ENCODE measurements at regions of chr15 and their contacts with region 1.

Region 1: DNA sequence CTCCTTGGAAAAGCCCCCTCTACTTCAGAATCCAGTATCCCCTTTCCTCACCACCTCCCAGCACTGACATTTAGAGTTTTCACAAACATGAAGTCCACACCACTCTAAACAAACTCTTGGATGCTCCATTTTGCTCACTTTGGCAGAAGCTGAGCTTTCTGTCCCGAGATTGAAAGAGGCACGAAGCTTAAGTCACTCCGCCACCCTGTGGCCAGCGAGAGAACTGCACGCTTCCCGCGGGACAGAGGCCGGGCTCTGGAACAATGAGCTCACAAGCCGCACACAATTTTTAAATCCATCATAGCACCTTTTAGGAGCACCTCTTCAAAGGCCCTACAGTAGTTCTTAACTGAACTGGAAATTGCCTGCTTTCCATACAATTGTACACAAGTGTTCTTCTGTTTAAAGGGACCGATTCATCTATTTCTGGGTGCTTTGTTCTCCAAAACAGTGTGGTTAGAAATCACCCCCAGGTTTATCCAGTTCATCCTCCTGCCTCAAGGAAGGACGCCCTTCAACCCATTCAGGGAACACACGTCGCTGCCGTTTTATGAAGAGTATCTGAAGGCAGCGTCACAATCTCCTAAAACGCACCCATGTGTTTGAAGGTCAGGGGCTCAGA is 226.1 kb downstream of the VPS13C start:
- DNase-seq: peak; percentile 85
- ATAC-seq: peak; percentile 74
- H3K4me3 Mint-ChIP-seq: no peak overlapping the region
- H3K27ac Mint-ChIP-seq: no peak overlapping the region
- H3K4me1 Mint-ChIP-seq: peaks cover 2% of the 10 kb centered on the region
- H3K27me3 Mint-ChIP-seq: peaks cover 19% of the 10 kb centered on the region

Region 2: DNA sequence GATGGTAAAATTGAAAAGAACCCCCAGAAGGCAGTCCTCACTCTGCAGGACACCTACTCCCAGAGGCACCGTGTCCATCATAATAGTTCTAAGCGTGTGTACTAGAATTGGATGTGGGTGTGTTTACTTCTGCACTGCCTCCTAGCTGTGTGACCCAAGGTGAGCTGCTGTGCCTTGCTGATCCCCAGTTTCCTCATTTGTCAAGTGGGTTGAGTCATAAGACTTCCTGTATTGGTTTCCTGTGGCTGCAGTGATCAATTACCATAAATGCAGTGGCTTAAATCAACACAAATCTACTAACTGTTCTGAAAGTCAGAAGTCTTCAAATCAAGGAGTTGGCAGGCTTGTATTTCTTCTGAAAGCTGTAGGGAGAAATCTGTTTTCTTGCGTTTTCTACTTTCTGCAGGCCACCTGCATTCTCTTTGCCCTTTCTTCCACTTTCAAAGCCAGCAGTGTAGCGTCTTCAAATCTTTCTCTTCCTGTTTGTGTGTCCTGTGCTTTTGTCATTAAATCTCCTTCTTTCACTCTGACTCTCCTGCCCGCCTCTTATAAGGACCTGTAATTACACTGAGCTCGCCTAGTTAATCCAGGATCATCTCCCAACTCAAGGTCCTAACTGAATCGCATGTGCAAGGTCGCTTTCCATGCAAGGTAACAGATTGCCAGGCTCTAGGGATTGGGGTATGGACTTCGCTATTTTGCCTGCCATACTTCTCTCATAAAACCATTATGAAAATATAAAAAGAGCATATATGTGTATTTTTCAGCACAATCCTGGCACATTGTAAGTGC is 664.1 kb before region 1 on chr15:
- CTCF ChIA-PET with region 1: interaction called, 26 read pairs
- POLR2A ChIA-PET with region 1: no interaction called
- intact Hi-C with region 1: loop called (anchors 1 to 2 kb)
- DNase-seq: peak; percentile 45
- ATAC-seq: peak; percentile 89
- H3K4me3 Mint-ChIP-seq: no peak overlapping the region
- H3K27ac Mint-ChIP-seq: peak overlapping the region; percentile 44
- H3K4me1 Mint-ChIP-seq: peaks cover 17% of the 10 kb centered on the region
- H3K27me3 Mint-ChIP-seq: peaks cover 9% of the 10 kb centered on the region

Region 3: GRCh38 chr15:61195116-61196002 is 638.8 kb before region 1 on chr15:
- CTCF ChIA-PET with region 1: interaction called, 10 read pairs
- POLR2A ChIA-PET with region 1: no interaction called
- intact Hi-C with region 1: loop called (anchors 1 to 10 kb)
- DNase-seq: peak; percentile 9
- ATAC-seq: no peak
- H3K4me3 Mint-ChIP-seq: no peak overlapping the region
- H3K27ac Mint-ChIP-seq: no peak overlapping the region
- H3K4me1 Mint-ChIP-seq: no peaks in the 10 kb centered on the region
- H3K27me3 Mint-ChIP-seq: peaks cover 1% of the 10 kb centered on the region

Region 4: GRCh38 chr15:61584410-61584809 is 249.8 kb before region 1 on chr15:
- CTCF ChIA-PET with region 1: no interaction called
- POLR2A ChIA-PET with region 1: no interaction called
- intact Hi-C with region 1: no loop called
- DNase-seq: no peak
- ATAC-seq: no peak
- H3K4me3 Mint-ChIP-seq: no peak overlapping the region
- H3K27ac Mint-ChIP-seq: no peak overlapping the region
- H3K4me1 Mint-ChIP-seq: no peaks in the 10 kb centered on the region
- H3K27me3 Mint-ChIP-seq: peaks cover 16% of the 10 kb centered on the region

Region 5: GRCh38 chr15:61621146-61621545 is 213.0 kb before region 1 on chr15:
- CTCF ChIA-PET with region 1: no interaction called
- POLR2A ChIA-PET with region 1: no interaction called
- intact Hi-C with region 1: loop called in 1 of 2 experiments (anchors 10 kb)
- DNase-seq: peak; percentile 55
- ATAC-seq: no peak
- H3K4me3 Mint-ChIP-seq: no peak overlapping the region
- H3K27ac Mint-ChIP-seq: no peak overlapping the region
- H3K4me1 Mint-ChIP-seq: no peaks in the 10 kb centered on the region
- H3K27me3 Mint-ChIP-seq: peaks cover 3% of the 10 kb centered on the region

Region 6: DNA sequence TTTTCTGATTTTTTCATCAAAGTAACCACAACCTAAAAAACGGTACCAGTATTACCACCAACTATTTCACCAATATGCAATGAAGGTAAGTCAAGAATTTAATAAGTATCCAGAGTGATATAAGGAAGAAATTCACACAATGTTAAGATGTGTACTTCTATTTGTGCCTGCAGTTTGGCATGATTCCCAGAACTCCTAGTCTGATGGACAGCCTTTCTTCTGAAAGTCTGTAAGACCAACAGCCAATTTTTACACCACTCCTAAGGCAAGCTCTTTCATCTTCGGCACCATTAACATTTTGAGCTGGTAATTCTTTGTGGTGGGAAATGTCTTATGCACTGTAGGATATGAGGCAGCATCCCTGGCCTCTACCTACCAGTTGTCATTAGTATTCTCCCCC is 117.8 kb after region 1 on chr15:
- CTCF ChIA-PET with region 1: no interaction called
- POLR2A ChIA-PET with region 1: no interaction called
- intact Hi-C with region 1: no loop called
- DNase-seq: no peak
- ATAC-seq: no peak
- H3K4me3 Mint-ChIP-seq: no peak overlapping the region
- H3K27ac Mint-ChIP-seq: no peak overlapping the region
- H3K4me1 Mint-ChIP-seq: no peaks in the 10 kb centered on the region
- H3K27me3 Mint-ChIP-seq: no peaks in the 10 kb centered on the region